H1 (cell line): ENCODE measurements at regions of chr7 and their contacts with region 1.

Region 1: GRCh38 chr7:37247861-37248260 is 200.8 kb downstream of the ELMO1 start:
- DNase-seq: no peak
- H3K4me3 ChIP-seq: peak overlapping the region in 2 of 4 experiments; percentile 4 to 40; a peak in 3 of 8 replicates
- H3K27ac ChIP-seq: peak overlapping the region; percentile 93
- H3K4me1 ChIP-seq: peaks cover 10 to 20% (median 12%) of the 10 kb centered on the region in 4 experiments; a peak in 6 of 7 replicates
- H3K27me3 ChIP-seq: no peaks in the 10 kb centered on the region
- CTCF ChIP-seq: no peak
- EP300 ChIP-seq: no peak
- POLR2A ChIP-seq: no peak
- RAD21 ChIP-seq: no peak

Region 2: GRCh38 chr7:37131855-37132254 is 116.0 kb before region 1 on chr7:
- CTCF ChIA-PET with region 1: no interaction called
- POLR2A ChIA-PET with region 1: no interaction called
- DNase-seq: no peak
- H3K4me3 ChIP-seq: no peak overlapping the region
- H3K27ac ChIP-seq: no peak overlapping the region
- H3K4me1 ChIP-seq: no peaks in the 10 kb centered on the region
- H3K27me3 ChIP-seq: no peaks in the 10 kb centered on the region
- CTCF ChIP-seq: no peak
- EP300 ChIP-seq: no peak
- POLR2A ChIP-seq: no peak
- RAD21 ChIP-seq: no peak

Region 3: GRCh38 chr7:37215290-37215923 is 32.5 kb before region 1 on chr7:
- CTCF ChIA-PET with region 1: no interaction called
- POLR2A ChIA-PET with region 1: no interaction called
- DNase-seq: no peak
- H3K4me3 ChIP-seq: no peak overlapping the region; a peak in 2 of 8 replicates
- H3K27ac ChIP-seq: no peak overlapping the region
- H3K4me1 ChIP-seq: peaks cover 4 to 12% (median 10%) of the 10 kb centered on the region in 4 experiments; a peak in 6 of 7 replicates
- H3K27me3 ChIP-seq: no peaks in the 10 kb centered on the region
- CTCF ChIP-seq: no peak
- EP300 ChIP-seq: no peak
- POLR2A ChIP-seq: no peak
- RAD21 ChIP-seq: no peak

Region 4: DNA sequence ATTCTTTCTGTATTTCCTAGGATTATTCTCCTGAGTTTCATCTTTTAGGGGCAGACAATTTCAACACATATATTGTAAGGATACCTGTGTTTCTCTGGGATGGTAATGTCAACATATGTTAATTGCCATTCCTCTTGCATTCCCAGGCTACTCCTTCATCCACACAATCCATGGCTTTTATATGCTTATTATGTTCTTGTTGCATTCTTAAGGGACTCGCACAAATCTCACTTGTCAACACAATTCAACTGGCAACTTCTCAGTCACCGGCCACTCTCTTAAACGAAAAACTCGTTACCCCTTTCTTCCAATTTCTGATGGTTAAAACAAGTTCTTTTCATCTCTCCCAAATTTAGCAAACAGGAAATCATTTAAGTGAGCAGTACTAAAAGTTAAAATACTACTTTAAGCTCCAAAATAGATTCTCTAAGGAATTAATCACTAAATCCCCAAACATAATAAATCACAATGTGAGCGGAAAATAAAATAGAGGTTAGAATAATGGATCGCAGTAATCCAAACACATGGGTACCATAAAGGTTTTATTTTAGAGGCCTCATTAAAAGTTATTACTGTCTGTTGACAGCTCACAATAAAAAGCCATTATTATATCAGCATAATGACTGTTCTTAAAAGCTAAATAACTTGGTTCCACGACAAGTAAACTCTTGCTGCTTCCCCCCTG is 22.4 kb before region 1 on chr7:
- CTCF ChIA-PET with region 1: interaction called, 4 read pairs
- POLR2A ChIA-PET with region 1: interaction called, 11 read pairs
- DNase-seq: no peak
- H3K4me3 ChIP-seq: peak overlapping the region in 1 of 4 experiments; percentile 33; a peak in 1 of 8 replicates
- H3K27ac ChIP-seq: no peak overlapping the region
- H3K4me1 ChIP-seq: peaks cover 0 to 13% (median 10%) of the 10 kb centered on the region in 4 experiments; a peak in 3 of 7 replicates
- H3K27me3 ChIP-seq: no peaks in the 10 kb centered on the region
- CTCF ChIP-seq: no peak
- EP300 ChIP-seq: no peak
- POLR2A ChIP-seq: no peak
- RAD21 ChIP-seq: no peak